ENCODE measurements at regions of chr5 and their contacts with region 1.

Region 1: DNA sequence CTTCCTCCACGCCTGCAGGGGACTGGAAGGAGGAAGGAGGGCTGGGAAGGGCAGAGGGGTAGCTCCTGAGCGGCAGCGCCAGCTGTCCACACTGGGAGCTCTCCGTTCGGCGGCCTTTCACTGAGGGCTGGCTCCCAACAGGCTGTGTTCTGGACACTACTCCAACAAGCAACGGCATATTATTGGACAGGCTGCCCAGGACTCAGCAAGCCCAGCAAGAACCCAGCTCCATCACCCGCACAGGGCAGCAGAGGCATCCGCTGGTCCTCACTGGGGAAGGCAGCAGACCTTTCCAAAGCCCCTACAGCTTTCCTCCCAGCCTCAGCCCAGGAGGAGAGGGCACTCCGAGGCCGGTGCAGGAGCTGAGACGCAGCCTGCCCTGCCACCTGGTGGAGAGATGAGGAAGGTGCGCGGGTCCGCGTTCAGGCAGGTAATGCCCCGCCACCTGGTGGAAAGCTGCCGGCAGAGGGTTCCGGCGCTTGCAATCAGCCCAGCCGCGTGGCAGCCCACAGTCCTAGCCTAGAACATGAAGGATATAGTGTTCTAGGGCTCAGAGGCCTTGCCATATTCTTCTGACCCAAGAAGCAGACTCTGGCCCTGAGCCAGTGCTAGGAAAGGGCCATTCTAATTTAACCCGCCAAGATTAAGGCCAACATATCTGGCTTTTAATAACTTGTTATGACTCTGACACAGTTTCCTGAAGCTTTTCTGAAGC is 74.4 kb downstream of the NRG2 start:
- DNase-seq: peak; percentile 97
- ATAC-seq: peak; percentile 98
- H3K4me3 Mint-ChIP-seq: no peak overlapping the region
- H3K27ac Mint-ChIP-seq: no peak overlapping the region
- H3K4me1 Mint-ChIP-seq: no peaks in the 10 kb centered on the region
- H3K27me3 Mint-ChIP-seq: peaks cover 15% of the 10 kb centered on the region
- CTCF ChIP-seq: peak; percentile 98

Region 2: GRCh38 chr5:139633295-139634027 is 335.2 kb before region 1 on chr5:
- CTCF ChIA-PET with region 1: interaction called, 11 read pairs
- POLR2A ChIA-PET with region 1: no interaction called
- DNase-seq: peak; percentile 71
- ATAC-seq: peak; percentile 47
- H3K4me3 Mint-ChIP-seq: no peak overlapping the region
- H3K27ac Mint-ChIP-seq: no peak overlapping the region
- H3K4me1 Mint-ChIP-seq: peaks cover 41% of the 10 kb centered on the region
- H3K27me3 Mint-ChIP-seq: no peaks in the 10 kb centered on the region
- CTCF ChIP-seq: peak; percentile 94

Region 3: DNA sequence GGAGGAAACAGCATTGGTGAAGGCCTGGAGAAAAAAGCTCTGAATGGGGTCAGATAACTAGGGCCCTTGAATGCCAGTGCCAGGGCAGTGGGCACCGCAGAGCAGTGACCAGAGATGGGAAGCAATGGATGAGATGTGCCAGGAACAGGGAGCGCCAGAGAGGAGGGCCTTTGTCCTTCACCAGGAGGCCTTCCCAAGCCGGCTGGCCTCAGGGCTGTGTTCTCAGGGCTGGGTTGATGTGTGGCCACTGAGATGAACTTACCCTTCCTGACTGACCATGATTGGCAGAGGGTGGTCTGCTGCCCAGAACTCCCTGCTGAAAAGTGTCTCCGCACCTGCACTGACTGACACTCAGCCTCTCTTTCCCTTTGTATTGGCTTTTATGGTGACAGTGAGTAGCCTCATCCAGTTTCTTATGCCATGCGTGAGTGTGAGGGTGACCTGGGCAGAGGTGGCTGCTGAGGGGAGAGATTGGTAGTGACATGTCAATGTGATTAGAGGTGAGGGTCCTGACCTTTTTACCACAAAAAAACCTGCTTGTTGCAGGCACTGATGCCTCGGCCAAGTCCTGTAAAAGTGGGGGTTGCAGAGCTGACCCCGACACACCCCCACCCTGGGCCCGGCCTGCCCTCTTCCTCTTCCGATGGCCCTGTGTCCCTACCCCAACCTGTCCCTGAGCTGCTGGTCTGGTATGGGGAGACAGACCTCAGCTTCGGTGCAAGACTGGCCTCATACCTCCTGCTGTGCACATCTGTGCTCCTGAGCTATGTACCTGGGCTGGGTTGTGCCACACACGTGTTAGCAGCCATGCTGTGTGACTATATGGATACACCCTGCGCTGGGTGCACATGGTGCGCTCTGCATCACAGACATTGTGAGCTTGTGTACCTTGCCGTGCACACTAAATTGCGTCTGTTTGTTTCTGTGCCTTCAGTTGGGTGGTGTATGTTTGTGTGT is 230.2 kb before region 1 on chr5:
- CTCF ChIA-PET with region 1: no interaction called
- POLR2A ChIA-PET with region 1: no interaction called
- DNase-seq: no peak
- ATAC-seq: no peak
- H3K4me3 Mint-ChIP-seq: no peak overlapping the region
- H3K27ac Mint-ChIP-seq: peak overlapping the region; percentile 75
- H3K4me1 Mint-ChIP-seq: peaks cover 42% of the 10 kb centered on the region
- H3K27me3 Mint-ChIP-seq: peaks cover 7% of the 10 kb centered on the region; the same call in 1 of the 2 replicates
- CTCF ChIP-seq: no peak

Region 4: GRCh38 chr5:139795074-139796001 is 173.4 kb before region 1 on chr5 and contains the start of gene PSD2:
- CTCF ChIA-PET with region 1: interaction called, 41 read pairs
- POLR2A ChIA-PET with region 1: no interaction called
- DNase-seq: peak; percentile 61
- ATAC-seq: peak; percentile 45
- H3K4me3 Mint-ChIP-seq: peak within 1 kb of the TSS; percentile 67
- H3K27ac Mint-ChIP-seq: no peak within 1 kb of the TSS
- H3K4me1 Mint-ChIP-seq: peaks cover 5% of the 10 kb centered on the region; the same call in 1 of the 2 replicates
- H3K27me3 Mint-ChIP-seq: peaks cover 89% of the 10 kb centered on the region
- CTCF ChIP-seq: no peak
- total RNA-seq, gene PSD2: 0.55 to 0.57 TPM (median 0.57 TPM) in 3 replicates

Region 5: DNA sequence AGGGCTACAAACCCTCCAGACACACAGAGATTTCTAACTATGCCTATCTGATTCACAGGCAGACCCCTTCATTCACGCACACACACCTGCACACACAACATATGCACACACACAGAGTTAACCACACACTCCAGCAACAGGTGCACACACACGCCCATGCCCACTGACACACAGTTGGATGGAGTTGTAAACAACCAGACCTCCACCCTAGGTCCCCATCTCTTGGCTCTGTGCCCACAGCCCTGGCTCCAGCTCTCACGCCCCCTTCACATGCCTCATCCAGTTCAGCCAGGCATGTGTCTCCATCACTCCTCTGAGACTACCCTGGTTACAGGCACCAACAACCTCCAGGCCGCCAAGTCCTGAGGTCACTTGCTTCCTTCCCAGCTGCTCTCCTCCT is 112.0 kb before region 1 on chr5:
- CTCF ChIA-PET with region 1: interaction called, 70 read pairs
- POLR2A ChIA-PET with region 1: interaction called, 4 read pairs
- DNase-seq: no peak
- ATAC-seq: no peak
- H3K4me3 Mint-ChIP-seq: no peak overlapping the region
- H3K27ac Mint-ChIP-seq: no peak overlapping the region
- H3K4me1 Mint-ChIP-seq: no peaks in the 10 kb centered on the region
- H3K27me3 Mint-ChIP-seq: peaks cover 3% of the 10 kb centered on the region
- CTCF ChIP-seq: no peak

Region 6: DNA sequence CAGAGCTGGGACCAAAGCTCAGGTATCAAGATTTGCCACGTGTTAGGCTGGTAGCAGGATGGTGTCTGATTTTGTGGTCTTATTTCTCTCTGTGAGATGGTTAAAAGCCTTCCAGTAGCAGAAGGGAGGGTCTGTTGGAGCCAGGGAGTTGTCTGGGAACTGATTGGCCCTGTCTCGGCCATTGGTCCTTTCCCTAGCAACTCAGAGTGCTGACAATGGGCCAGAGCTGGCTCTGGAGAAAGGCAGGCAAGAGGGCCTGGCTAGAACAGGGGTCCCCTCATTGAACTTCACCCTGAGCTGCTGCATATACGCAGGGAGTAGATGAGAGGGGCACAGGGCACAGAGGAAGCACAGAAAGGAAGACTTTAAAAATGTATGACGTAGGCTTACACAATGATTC is 80.3 kb before region 1 on chr5:
- CTCF ChIA-PET with region 1: interaction called, 61 read pairs
- POLR2A ChIA-PET with region 1: no interaction called
- DNase-seq: no peak
- ATAC-seq: peak; percentile 52
- H3K4me3 Mint-ChIP-seq: no peak overlapping the region
- H3K27ac Mint-ChIP-seq: no peak overlapping the region
- H3K4me1 Mint-ChIP-seq: no peaks in the 10 kb centered on the region
- H3K27me3 Mint-ChIP-seq: peaks cover 2% of the 10 kb centered on the region; the same call in 1 of the 2 replicates
- CTCF ChIP-seq: no peak

Region 7: DNA sequence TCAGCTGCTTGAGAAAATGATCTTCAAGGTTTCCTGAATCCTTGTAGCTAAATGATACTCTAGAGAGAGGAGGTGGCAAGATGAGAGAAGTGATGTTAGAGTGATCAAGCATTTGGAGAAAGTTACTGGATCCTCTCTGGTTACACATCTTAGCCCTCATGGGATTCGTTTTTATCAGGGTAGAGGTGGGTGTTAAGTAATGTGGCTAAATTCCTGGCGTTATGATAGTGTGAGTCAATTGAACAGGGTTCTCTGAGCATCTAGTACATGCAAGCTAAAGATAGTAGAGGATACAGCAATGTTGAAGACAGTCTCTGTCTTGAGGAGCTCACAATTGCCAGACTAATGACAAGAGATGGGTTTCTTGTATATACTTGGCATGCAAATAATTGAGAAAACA is 49.4 kb before region 1 on chr5:
- CTCF ChIA-PET with region 1: interaction called, 30 read pairs
- POLR2A ChIA-PET with region 1: no interaction called
- DNase-seq: no peak
- ATAC-seq: no peak
- H3K4me3 Mint-ChIP-seq: no peak overlapping the region
- H3K27ac Mint-ChIP-seq: no peak overlapping the region
- H3K4me1 Mint-ChIP-seq: peaks cover 10% of the 10 kb centered on the region
- H3K27me3 Mint-ChIP-seq: peaks cover 5% of the 10 kb centered on the region; the same call in 1 of the 2 replicates
- CTCF ChIP-seq: no peak

Region 8: GRCh38 chr5:139985733-139986132 is 17.0 kb after region 1 on chr5:
- CTCF ChIA-PET with region 1: interaction called, 59 read pairs
- POLR2A ChIA-PET with region 1: no interaction called
- DNase-seq: no peak
- ATAC-seq: no peak
- H3K4me3 Mint-ChIP-seq: no peak overlapping the region
- H3K27ac Mint-ChIP-seq: no peak overlapping the region
- H3K4me1 Mint-ChIP-seq: peaks cover 10% of the 10 kb centered on the region
- H3K27me3 Mint-ChIP-seq: peaks cover 10% of the 10 kb centered on the region
- CTCF ChIP-seq: no peak

Region 9: GRCh38 chr5:140273401-140273877 is 304.7 kb after region 1 on chr5:
- CTCF ChIA-PET with region 1: no interaction called
- POLR2A ChIA-PET with region 1: no interaction called
- DNase-seq: no peak
- ATAC-seq: no peak
- H3K4me3 Mint-ChIP-seq: no peak overlapping the region
- H3K27ac Mint-ChIP-seq: peak overlapping the region; percentile 11; the same call in 1 of the 2 replicates
- H3K4me1 Mint-ChIP-seq: no peaks in the 10 kb centered on the region
- H3K27me3 Mint-ChIP-seq: no peaks in the 10 kb centered on the region
- CTCF ChIP-seq: no peak